ENCODE measurements at regions of chr21 and their contacts with region 1.

Region 1: GRCh38 chr21:25607151-25608043 is at the start of gene MRPL39:
- DNase-seq: peak; percentile 74 to 88 (median 82)
- ATAC-seq: peak; percentile 93
- H3K4me3 ChIP-seq: peak within 1 kb of the TSS; percentile 90
- H3K4me3 Mint-ChIP-seq: peak within 1 kb of the TSS; percentile 89 to 100 (median 100)
- H3K27ac ChIP-seq: peak within 1 kb of the TSS; percentile 76
- H3K27ac Mint-ChIP-seq: peak within 1 kb of the TSS; percentile 91 to 100 (median 99)
- H3K4me1 ChIP-seq: peaks cover 17 to 21% of the 10 kb centered on the region in 2 donors
- H3K4me1 Mint-ChIP-seq: peaks cover 18 to 53% (median 47%) of the 10 kb centered on the region in 7 donors
- H3K27me3 ChIP-seq: no peaks in the 10 kb centered on the region
- H3K27me3 Mint-ChIP-seq: peaks cover 0 to 2% (median 0%) of the 10 kb centered on the region in 5 donors
- total RNA-seq, gene MRPL39: 7.6 to 35.7 (median 19.5) TPM

Region 2: DNA sequence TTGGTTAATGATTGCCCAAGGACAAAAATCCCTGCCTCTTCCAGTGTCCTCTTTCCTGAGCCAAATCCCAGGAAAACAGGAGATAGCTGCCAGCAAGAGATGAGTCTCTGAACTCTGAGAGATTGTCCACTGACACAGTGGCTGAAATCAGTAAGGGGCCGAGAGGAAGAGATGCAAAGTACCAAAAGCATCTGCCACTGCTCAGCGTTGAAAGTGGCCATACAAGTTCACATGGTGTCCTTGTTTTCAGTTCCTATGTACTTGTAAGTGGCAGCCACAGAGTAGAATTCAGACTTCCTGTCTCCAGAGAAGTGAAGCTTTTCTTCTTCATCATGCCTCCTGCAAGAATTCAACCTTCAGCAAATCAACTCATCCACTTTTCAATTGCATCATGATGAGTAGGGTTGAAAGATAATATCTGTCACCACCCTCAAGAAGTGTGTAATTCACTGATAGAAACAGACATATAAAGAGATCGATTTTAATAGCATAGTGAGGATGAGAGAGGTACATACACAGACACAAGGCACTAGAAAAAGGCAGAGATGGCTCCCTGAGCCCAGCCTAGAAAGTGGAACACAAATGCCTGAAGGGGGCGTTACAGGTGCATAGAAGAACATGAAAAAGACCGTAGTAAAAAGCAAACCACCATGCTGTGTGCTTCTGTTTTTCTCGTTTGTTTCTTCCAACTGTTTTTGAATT is 185.9 kb before region 1 on chr21:
- CTCF ChIA-PET with region 1: no interaction called
- POLR2A ChIA-PET with region 1: no interaction called
- intact Hi-C with region 1: loop called (anchors 1 to 2 kb)
- DNase-seq: peak in 8 of 9 donors; percentile 18 to 50 (median 40)
- ATAC-seq: peak; percentile 91
- H3K4me3 ChIP-seq: no peak overlapping the region
- H3K4me3 Mint-ChIP-seq: peak overlapping the region in 6 of 10 donors; percentile 7 to 88 (median 56)
- H3K27ac ChIP-seq: no peak overlapping the region
- H3K27ac Mint-ChIP-seq: peak overlapping the region in 7 of 9 donors; percentile 1 to 84 (median 41)
- H3K4me1 ChIP-seq: peaks cover 6 to 7% of the 10 kb centered on the region in 2 donors
- H3K4me1 Mint-ChIP-seq: peaks cover 4 to 25% (median 12%) of the 10 kb centered on the region in 7 donors
- H3K27me3 ChIP-seq: no peaks in the 10 kb centered on the region
- H3K27me3 Mint-ChIP-seq: peaks cover 0 to 6% (median 0%) of the 10 kb centered on the region in 5 donors

Region 3: DNA sequence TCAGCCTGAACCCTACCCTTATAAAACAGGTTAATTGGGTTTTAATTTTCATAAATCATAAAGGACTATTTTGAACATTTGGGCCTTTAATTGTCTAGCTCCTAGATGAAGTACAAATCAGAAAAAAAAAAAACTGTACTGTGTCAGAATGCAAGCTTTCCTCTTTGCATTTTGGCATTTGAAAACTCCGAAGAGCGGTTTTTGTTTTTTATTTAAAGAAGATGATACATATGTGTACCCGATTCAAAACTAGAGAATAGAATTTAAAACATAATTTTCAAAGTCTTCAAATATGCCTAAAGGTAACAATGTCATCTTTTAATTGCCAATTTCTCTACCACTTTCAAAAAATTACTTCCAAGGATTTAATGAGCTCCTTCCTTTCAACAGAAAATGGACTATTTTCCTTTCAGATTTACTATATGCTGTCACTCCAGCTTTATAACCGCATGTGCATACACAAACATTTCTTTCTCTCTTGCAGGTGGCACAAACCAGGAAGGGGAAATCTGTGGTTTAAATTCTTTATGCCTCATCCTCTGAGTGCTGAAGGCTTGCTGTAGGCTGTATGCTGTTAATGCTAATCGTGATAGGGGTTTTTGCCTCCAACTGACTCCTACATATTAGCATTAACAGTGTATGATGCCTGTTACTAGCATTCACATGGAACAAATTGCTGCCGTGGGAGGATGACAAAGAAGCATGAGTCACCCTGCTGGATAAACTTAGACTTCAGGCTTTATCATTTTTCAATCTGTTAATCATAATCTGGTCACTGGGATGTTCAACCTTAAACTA is 33.8 kb before region 1 on chr21:
- CTCF ChIA-PET with region 1: no interaction called
- POLR2A ChIA-PET with region 1: interaction called, 4 read pairs
- intact Hi-C with region 1: loop called (anchors 1 kb)
- DNase-seq: peak in 8 of 9 donors; percentile 42 to 63 (median 52)
- ATAC-seq: peak; percentile 81
- H3K4me3 ChIP-seq: peak overlapping the region; percentile 33
- H3K4me3 Mint-ChIP-seq: peak overlapping the region; percentile 72 to 92 (median 80)
- H3K27ac ChIP-seq: peak overlapping the region; percentile 42
- H3K27ac Mint-ChIP-seq: peak overlapping the region; percentile 80 to 94 (median 90)
- H3K4me1 ChIP-seq: peaks cover 4 to 15% of the 10 kb centered on the region in 2 donors
- H3K4me1 Mint-ChIP-seq: peaks cover 12 to 72% (median 37%) of the 10 kb centered on the region in 7 donors
- H3K27me3 ChIP-seq: no peaks in the 10 kb centered on the region
- H3K27me3 Mint-ChIP-seq: no peaks in the 10 kb centered on the region

Region 4: GRCh38 chr21:25708467-25709065 is 101.2 kb after region 1 on chr21:
- CTCF ChIA-PET with region 1: interaction called, 31 read pairs
- POLR2A ChIA-PET with region 1: interaction called, 9 read pairs
- intact Hi-C with region 1: loop called (anchors 1 kb)
- DNase-seq: peak in 8 of 9 donors; percentile 17 to 56 (median 39)
- ATAC-seq: peak; percentile 67
- H3K4me3 ChIP-seq: no peak overlapping the region
- H3K4me3 Mint-ChIP-seq: no peak overlapping the region
- H3K27ac ChIP-seq: no peak overlapping the region
- H3K27ac Mint-ChIP-seq: no peak overlapping the region
- H3K4me1 ChIP-seq: no peaks in the 10 kb centered on the region
- H3K4me1 Mint-ChIP-seq: peaks cover 0 to 5% (median 0%) of the 10 kb centered on the region in 7 donors
- H3K27me3 ChIP-seq: no peaks in the 10 kb centered on the region
- H3K27me3 Mint-ChIP-seq: no peaks in the 10 kb centered on the region

Region 5: DNA sequence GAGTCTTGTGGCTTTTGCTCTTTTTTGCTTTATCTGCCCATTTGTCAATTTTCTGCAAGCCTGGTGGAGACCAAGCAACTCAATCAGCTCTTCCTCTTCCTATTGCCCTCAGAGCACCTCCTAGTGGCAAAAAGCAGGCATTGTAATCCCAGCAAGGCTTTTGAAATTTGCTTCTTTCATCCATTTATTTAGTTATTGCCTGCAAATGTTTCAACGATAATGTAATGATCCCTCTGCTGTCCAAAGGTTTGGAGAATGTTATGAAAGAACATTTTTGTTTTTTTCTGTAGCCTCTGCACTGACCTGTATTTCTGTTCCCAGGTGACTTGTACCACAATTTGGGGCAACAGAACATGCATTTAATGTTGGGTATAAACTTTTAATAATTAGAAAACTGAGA is 255.2 kb after region 1 on chr21:
- CTCF ChIA-PET with region 1: no interaction called
- POLR2A ChIA-PET with region 1: no interaction called
- intact Hi-C with region 1: loop called in 1 of 2 experiments (anchors 1 kb)
- DNase-seq: peak in 6 of 9 donors; percentile 7 to 33 (median 20)
- ATAC-seq: peak; percentile 54
- H3K4me3 ChIP-seq: no peak overlapping the region
- H3K4me3 Mint-ChIP-seq: no peak overlapping the region
- H3K27ac ChIP-seq: no peak overlapping the region
- H3K27ac Mint-ChIP-seq: no peak overlapping the region
- H3K4me1 ChIP-seq: no peaks in the 10 kb centered on the region
- H3K4me1 Mint-ChIP-seq: peaks cover 0 to 7% (median 0%) of the 10 kb centered on the region in 7 donors
- H3K27me3 ChIP-seq: no peaks in the 10 kb centered on the region
- H3K27me3 Mint-ChIP-seq: peaks cover 0 to 19% (median 0%) of the 10 kb centered on the region in 5 donors

Region 6: GRCh38 chr21:26194811-26195251 is 587.4 kb after region 1 on chr21:
- CTCF ChIA-PET with region 1: no interaction called
- POLR2A ChIA-PET with region 1: no interaction called
- intact Hi-C with region 1: no loop called
- DNase-seq: no peak
- ATAC-seq: no peak
- H3K4me3 ChIP-seq: no peak overlapping the region
- H3K4me3 Mint-ChIP-seq: no peak overlapping the region
- H3K27ac ChIP-seq: no peak overlapping the region
- H3K27ac Mint-ChIP-seq: no peak overlapping the region
- H3K4me1 ChIP-seq: no peaks in the 10 kb centered on the region
- H3K4me1 Mint-ChIP-seq: no peaks in the 10 kb centered on the region
- H3K27me3 ChIP-seq: no peaks in the 10 kb centered on the region
- H3K27me3 Mint-ChIP-seq: peaks cover 0 to 3% (median 0%) of the 10 kb centered on the region in 5 donors

Region 7: GRCh38 chr21:26842976-26843932 is 1235.9 kb after region 1 on chr21:
- CTCF ChIA-PET with region 1: no interaction called
- POLR2A ChIA-PET with region 1: no interaction called
- intact Hi-C with region 1: loop called (anchors 5 to 10 kb)
- DNase-seq: peak in 5 of 9 donors; percentile 16 to 55 (median 28)
- ATAC-seq: peak; percentile 62
- H3K4me3 ChIP-seq: peak overlapping the region; percentile 32
- H3K4me3 Mint-ChIP-seq: peak overlapping the region; percentile 75 to 89 (median 82)
- H3K27ac ChIP-seq: no peak overlapping the region
- H3K27ac Mint-ChIP-seq: peak overlapping the region in 3 of 9 donors; percentile 60 to 84 (median 69)
- H3K4me1 ChIP-seq: peaks cover 3 to 11% of the 10 kb centered on the region in 2 donors
- H3K4me1 Mint-ChIP-seq: peaks cover 32 to 49% (median 41%) of the 10 kb centered on the region in 7 donors
- H3K27me3 ChIP-seq: peaks cover 0 to 9% of the 10 kb centered on the region in 2 donors
- H3K27me3 Mint-ChIP-seq: peaks cover 66 to 87% (median 75%) of the 10 kb centered on the region in 5 donors

Measured in naive thymus-derived CD4-positive, alpha-beta T cell (primary cell).